Caco-2 (cell line): ENCODE measurements at regions of chr11 and their contacts with region 1.

Region 1: GRCh38 chr11:18088966-18089365 is 16.9 kb downstream of the SAAL1 start:
- DNase-seq: no peak
- H3K4me3 ChIP-seq: no peak overlapping the region
- H3K4me3 Mint-ChIP-seq: no peak overlapping the region
- H3K27ac Mint-ChIP-seq: no peak overlapping the region
- H3K4me1 ChIP-seq: peaks cover 17% of the 10 kb centered on the region
- H3K4me1 Mint-ChIP-seq: peaks cover 11% of the 10 kb centered on the region
- H3K27me3 ChIP-seq: no peaks in the 10 kb centered on the region
- H3K27me3 Mint-ChIP-seq: no peaks in the 10 kb centered on the region
- CTCF ChIP-seq: no peak

Region 2: DNA sequence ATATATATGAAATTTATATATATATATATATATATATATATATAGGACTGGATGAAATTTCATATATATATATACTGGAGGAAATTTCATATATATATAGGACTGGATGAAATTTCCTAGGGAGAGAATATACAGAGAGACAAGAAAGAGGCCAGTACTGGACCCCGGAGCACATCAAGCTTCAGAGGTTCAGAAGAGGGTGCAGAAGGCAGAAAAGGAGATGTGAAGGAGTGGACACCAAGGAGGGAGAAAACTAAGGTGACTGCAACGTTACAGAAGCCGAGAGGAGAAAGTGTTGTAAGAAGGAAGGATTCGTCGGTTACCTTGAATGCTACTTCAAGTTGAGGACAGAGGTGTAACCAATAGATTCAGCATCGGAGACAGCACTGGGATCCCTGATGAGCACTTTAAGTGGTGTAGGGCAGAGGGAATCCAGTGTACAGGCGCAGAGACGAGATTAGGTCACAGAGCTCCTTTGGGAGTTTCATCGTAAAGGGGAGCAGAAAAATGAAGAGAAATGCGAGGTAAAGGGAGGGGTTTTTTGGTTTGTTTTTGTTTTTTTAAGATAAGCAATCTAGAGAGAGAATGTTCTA is 34.4 kb before region 1 on chr11:
- CTCF ChIA-PET with region 1: no interaction called
- POLR2A ChIA-PET with region 1: no interaction called
- intact Hi-C with region 1: loop called (anchors 1 kb)
- DNase-seq: no peak
- H3K4me3 ChIP-seq: no peak overlapping the region
- H3K4me3 Mint-ChIP-seq: no peak overlapping the region
- H3K27ac Mint-ChIP-seq: no peak overlapping the region
- H3K4me1 ChIP-seq: peaks cover 6% of the 10 kb centered on the region; the same call in 1 of the 2 replicates
- H3K4me1 Mint-ChIP-seq: peaks cover 7% of the 10 kb centered on the region
- H3K27me3 ChIP-seq: no peaks in the 10 kb centered on the region
- H3K27me3 Mint-ChIP-seq: peaks cover 3% of the 10 kb centered on the region
- CTCF ChIP-seq: no peak